Stomach (tissue), 19 donors: ENCODE measurements at regions of chr15 and their contacts with region 1.

Region 1: GRCh38 chr15:43903864-43904290 is 77.1 kb downstream of the WDR76 start:
- DNase-seq: peak; percentile 42 to 81
- H3K4me3 ChIP-seq: no peak overlapping the region
- H3K27ac ChIP-seq: no peak overlapping the region
- H3K4me1 ChIP-seq: peaks cover 0 to 8% (median 2%) of the 10 kb centered on the region in 4 donors
- H3K27me3 ChIP-seq: peaks cover 0 to 5% (median 0%) of the 10 kb centered on the region in 3 donors
- CTCF ChIP-seq: peak in 5 of 7 experiments; percentile 50 to 78 (median 71)
- EP300 ChIP-seq: no peak
- POLR2A ChIP-seq: no peak

Region 2: DNA sequence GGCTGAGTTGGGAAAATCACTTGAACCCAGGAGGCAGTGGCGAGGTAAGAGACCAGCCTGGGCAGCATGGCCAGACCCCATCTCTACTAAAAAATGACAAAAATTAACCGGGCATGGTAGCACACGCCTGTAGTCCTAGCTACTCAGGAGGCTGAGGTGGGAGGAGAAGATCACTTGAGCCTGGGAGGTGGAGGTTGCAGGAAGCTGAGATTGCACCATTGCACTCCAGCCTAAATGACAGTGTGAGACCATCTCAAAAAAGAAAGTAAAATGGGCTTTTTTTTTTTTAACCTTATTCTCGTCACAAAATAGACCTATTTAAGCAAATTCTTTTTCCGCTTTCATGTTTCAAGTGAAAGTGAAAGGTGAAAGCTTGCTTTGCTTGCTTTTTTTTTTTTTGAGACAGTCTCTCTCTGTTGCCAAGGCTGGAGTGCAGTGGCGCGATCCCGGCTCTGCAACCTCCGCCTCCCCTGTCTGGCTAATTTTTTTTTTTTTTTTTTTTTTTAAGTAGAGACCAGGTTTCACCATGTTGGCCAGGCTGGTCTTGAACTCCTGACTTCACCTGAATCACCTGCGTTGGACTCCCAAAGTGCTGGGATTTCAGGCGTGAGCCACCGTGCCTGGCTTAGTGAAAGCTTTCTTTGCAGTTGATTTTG is 154.1 kb before region 1 on chr15:
- intact Hi-C with region 1: no loop called
- DNase-seq: peak; percentile 34 to 66
- H3K4me3 ChIP-seq: peak overlapping the region; percentile 21 to 76 (median 42)
- H3K27ac ChIP-seq: peak overlapping the region; percentile 53 to 75 (median 72)
- H3K4me1 ChIP-seq: peaks cover 31 to 72% (median 56%) of the 10 kb centered on the region in 4 donors
- H3K27me3 ChIP-seq: no peaks in the 10 kb centered on the region
- CTCF ChIP-seq: no peak
- EP300 ChIP-seq: no peak
- POLR2A ChIP-seq: no peak

Region 3: GRCh38 chr15:43948691-43949325 is 44.9 kb after region 1 on chr15:
- intact Hi-C with region 1: no loop called
- DNase-seq: no peak
- H3K4me3 ChIP-seq: no peak overlapping the region
- H3K27ac ChIP-seq: no peak overlapping the region
- H3K4me1 ChIP-seq: no peaks in the 10 kb centered on the region
- H3K27me3 ChIP-seq: peaks cover 0 to 3% (median 0%) of the 10 kb centered on the region in 3 donors
- CTCF ChIP-seq: no peak
- EP300 ChIP-seq: no peak
- POLR2A ChIP-seq: no peak

Region 4: DNA sequence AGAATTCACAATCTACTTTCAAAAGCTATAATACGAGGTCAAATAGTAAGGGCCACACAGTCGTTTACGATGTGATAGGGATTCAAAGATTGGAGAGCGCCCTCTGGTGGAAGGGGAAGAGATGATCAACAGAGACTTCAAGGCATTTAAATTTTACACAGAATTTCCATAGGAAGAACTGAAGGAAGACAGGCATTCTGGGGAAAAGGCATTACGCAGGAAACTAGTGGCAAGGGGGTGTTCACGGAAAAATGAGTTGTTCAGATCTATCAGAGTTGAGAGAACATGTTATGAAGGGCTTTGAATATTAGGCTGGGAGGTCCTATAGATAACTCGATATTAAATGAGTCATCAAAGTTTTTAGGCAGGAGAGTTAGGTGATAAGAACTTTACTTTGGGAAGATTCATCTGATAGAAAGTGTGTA is 162.5 kb after region 1 on chr15:
- intact Hi-C with region 1: loop called (anchors 10 kb)
- DNase-seq: peak; percentile 68 to 74
- H3K4me3 ChIP-seq: no peak overlapping the region
- H3K27ac ChIP-seq: no peak overlapping the region
- H3K4me1 ChIP-seq: peaks cover 0 to 2% (median 0%) of the 10 kb centered on the region in 4 donors
- H3K27me3 ChIP-seq: no peaks in the 10 kb centered on the region
- CTCF ChIP-seq: peak in 5 of 7 experiments; percentile 47 to 69 (median 60)
- EP300 ChIP-seq: no peak
- POLR2A ChIP-seq: no peak

Region 5: GRCh38 chr15:44215594-44215993 is 311.7 kb after region 1 on chr15:
- intact Hi-C with region 1: loop called (anchors 10 kb)
- DNase-seq: no peak
- H3K4me3 ChIP-seq: no peak overlapping the region
- H3K27ac ChIP-seq: no peak overlapping the region
- H3K4me1 ChIP-seq: peaks cover 0 to 4% (median 2%) of the 10 kb centered on the region in 4 donors
- H3K27me3 ChIP-seq: peaks cover 0 to 23% (median 0%) of the 10 kb centered on the region in 3 donors
- CTCF ChIP-seq: no peak
- EP300 ChIP-seq: no peak
- POLR2A ChIP-seq: no peak